ENCODE measurements at regions of chr7 and their contacts with region 1.

Region 1: DNA sequence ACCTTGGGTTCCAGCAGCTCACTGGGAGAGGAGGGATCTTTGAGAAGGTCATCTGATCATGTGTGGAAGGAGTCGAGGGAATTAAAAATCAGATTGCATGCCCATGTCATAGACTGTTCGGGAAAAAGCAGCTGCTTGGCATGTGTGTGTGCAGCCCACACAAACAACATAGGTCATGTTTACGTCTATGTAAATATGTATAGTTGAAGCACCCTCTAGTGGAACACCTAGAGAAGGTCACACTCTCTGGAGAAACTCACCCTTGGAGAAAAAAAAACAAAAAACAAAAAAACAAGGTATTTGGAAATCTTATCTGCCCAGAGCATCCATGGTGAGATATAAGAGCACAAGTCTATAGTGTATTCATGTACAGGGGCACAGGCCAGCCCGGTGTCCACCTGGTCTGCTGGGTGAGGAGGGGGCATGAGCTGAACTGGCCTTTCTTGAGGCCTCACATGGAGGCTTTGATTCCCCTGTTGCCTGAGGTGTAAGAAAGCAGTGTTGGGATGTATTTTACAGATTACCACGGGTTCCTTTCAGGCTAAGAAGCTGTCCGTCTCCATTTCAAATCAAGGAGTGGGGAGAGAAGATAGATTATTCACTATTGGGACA is 98.0 kb downstream of the NPY start:
- DNase-seq: no peak
- ATAC-seq: peak; percentile 54
- H3K4me3 ChIP-seq: no peak overlapping the region
- H3K4me3 Mint-ChIP-seq: no peak overlapping the region
- H3K27ac ChIP-seq: no peak overlapping the region
- H3K27ac Mint-ChIP-seq: no peak overlapping the region
- H3K4me1 ChIP-seq: no peaks in the 10 kb centered on the region
- H3K4me1 Mint-ChIP-seq: no peaks in the 10 kb centered on the region
- H3K27me3 ChIP-seq: no peaks in the 10 kb centered on the region
- H3K27me3 Mint-ChIP-seq: peaks cover 0 to 3% (median 0%) of the 10 kb centered on the region in 5 donors

Region 2: DNA sequence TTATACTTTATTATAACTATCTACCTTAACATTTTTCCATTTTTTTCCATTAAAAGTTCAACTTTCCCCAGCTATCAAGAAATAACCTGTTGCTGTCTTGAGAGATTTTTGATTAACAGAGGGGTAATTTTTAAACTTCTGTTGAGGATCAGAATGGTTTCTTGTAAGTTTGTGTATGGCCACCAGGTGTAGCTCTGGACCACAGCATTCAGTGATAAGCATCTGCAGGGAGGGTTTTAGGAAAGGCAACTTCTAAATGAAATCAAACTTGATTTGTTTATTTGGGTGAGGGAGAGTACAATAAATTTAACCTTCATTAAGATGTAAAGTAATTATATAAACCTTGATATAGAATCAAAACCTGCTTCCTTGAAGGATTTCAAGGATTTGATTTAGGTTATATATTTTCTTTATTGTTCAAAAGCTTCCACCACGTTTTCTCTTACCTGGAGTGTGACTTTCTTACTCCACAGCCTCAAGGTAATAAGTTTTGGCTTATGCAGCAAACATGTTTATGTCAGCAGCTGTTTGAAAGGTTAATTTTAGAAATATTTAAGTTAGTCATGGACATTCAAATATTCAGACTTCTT is 518.7 kb before region 1 on chr7:
- CTCF ChIA-PET with region 1: no interaction called
- POLR2A ChIA-PET with region 1: no interaction called
- intact Hi-C with region 1: loop called in 1 of 2 experiments (anchors 2 kb)
- DNase-seq: peak in 3 of 9 donors; percentile 7 to 20 (median 12)
- ATAC-seq: no peak
- H3K4me3 ChIP-seq: no peak overlapping the region
- H3K4me3 Mint-ChIP-seq: no peak overlapping the region
- H3K27ac ChIP-seq: no peak overlapping the region
- H3K27ac Mint-ChIP-seq: no peak overlapping the region
- H3K4me1 ChIP-seq: no peaks in the 10 kb centered on the region
- H3K4me1 Mint-ChIP-seq: no peaks in the 10 kb centered on the region
- H3K27me3 ChIP-seq: no peaks in the 10 kb centered on the region
- H3K27me3 Mint-ChIP-seq: peaks cover 3 to 19% (median 6%) of the 10 kb centered on the region in 5 donors

Region 3: DNA sequence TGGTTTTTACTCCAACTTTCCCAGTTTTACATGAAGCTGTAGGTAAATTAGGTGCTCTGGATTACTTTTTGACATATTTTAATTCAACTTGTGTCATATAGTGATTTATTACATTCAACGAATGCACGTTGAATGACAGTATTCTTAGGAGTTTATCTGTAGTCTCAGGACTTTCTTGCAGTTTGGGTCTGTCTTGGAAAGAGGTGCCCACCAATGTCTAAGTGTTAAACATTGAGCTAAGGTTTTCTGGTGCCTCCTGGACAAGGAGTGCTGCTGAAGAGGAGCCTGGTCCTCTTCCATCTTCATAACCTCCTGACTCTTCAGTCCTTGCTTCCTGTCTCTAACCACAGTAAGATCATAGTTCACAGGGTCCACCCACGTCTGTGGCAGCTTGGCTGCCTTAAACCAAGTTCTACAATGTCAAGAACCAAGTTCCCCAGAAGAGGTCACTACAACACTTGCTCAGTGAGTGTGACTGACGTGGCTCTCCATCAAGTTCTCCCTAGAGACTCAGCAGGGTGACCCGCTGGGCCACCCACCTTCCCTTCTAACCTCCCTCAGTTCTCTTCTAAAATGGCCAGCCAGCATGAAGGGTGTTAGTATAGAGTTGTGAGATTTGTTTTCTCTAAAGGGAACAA is 91.9 kb before region 1 on chr7:
- CTCF ChIA-PET with region 1: no interaction called
- POLR2A ChIA-PET with region 1: interaction called, 4 read pairs
- intact Hi-C with region 1: loop called in 1 of 2 experiments (anchors 2 kb)
- DNase-seq: peak in 8 of 9 donors; percentile 17 to 51 (median 40)
- ATAC-seq: peak; percentile 83
- H3K4me3 ChIP-seq: no peak overlapping the region
- H3K4me3 Mint-ChIP-seq: no peak overlapping the region
- H3K27ac ChIP-seq: no peak overlapping the region
- H3K27ac Mint-ChIP-seq: no peak overlapping the region
- H3K4me1 ChIP-seq: peaks cover 0 to 5% of the 10 kb centered on the region in 2 donors
- H3K4me1 Mint-ChIP-seq: peaks cover 6 to 19% (median 12%) of the 10 kb centered on the region in 7 donors
- H3K27me3 ChIP-seq: peaks cover 0 to 16% of the 10 kb centered on the region in 2 donors
- H3K27me3 Mint-ChIP-seq: peaks cover 48 to 56% (median 50%) of the 10 kb centered on the region in 5 donors

Region 4: DNA sequence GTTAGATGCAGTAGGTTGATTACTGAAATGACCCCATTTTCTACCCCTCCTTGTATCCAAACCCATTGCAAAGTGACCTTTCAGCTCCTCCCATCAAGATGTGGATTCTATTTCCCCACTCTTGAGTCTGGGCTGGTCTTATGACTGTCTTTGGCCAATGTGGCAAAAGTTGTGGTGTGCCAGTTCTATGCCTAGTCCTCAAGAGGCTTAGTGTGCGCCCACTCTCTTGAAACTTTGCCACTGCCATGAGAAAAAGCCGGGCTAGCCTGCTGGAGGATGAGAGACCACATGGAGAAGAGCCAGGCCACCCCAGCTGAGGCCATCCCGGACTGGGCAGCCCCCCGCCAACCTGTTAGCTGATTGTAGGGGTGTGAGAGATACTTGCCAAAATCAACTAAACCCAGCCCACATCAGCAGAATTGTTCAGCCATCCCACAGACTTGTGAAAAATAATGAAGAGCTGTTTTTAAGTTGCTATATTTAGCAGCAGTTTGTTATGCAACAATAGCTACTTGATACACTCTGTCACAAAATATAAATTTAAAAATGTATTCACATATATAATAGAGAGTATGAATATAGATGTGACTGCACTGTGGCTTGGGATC is 60.3 kb after region 1 on chr7:
- CTCF ChIA-PET with region 1: no interaction called
- POLR2A ChIA-PET with region 1: no interaction called
- intact Hi-C with region 1: no loop called
- DNase-seq: no peak
- ATAC-seq: peak; percentile 54
- H3K4me3 ChIP-seq: no peak overlapping the region
- H3K4me3 Mint-ChIP-seq: peak overlapping the region in 1 of 10 donors; percentile 13
- H3K27ac ChIP-seq: no peak overlapping the region
- H3K27ac Mint-ChIP-seq: peak overlapping the region in 1 of 9 donors; percentile 41
- H3K4me1 ChIP-seq: peaks cover 0 to 9% of the 10 kb centered on the region in 2 donors
- H3K4me1 Mint-ChIP-seq: peaks cover 6 to 24% (median 9%) of the 10 kb centered on the region in 7 donors
- H3K27me3 ChIP-seq: no peaks in the 10 kb centered on the region
- H3K27me3 Mint-ChIP-seq: peaks cover 0 to 13% (median 2%) of the 10 kb centered on the region in 5 donors

Region 5: DNA sequence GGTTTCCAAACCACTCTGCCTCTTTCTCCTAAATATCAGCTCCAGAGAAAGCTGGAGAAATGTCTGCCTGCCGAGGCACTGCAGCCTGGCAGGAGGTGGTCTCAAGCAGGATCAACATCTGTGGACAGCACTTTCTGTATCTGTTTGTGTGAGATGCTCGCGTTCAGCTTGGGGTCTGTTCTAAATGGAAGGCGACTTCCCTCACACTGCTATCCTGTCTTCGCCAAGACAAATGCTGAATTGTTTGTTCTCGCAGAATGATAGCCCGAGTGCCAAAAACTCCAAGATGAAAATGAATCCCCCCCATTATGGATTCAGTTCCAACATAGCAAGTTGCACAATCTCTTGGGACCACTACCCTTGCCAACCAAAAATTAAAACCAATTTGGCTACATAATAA is 119.0 kb after region 1 on chr7:
- CTCF ChIA-PET with region 1: no interaction called
- POLR2A ChIA-PET with region 1: no interaction called
- intact Hi-C with region 1: no loop called
- DNase-seq: no peak
- ATAC-seq: no peak
- H3K4me3 ChIP-seq: no peak overlapping the region
- H3K4me3 Mint-ChIP-seq: no peak overlapping the region
- H3K27ac ChIP-seq: no peak overlapping the region
- H3K27ac Mint-ChIP-seq: no peak overlapping the region
- H3K4me1 ChIP-seq: no peaks in the 10 kb centered on the region
- H3K4me1 Mint-ChIP-seq: no peaks in the 10 kb centered on the region
- H3K27me3 ChIP-seq: no peaks in the 10 kb centered on the region
- H3K27me3 Mint-ChIP-seq: peaks cover 0 to 12% (median 0%) of the 10 kb centered on the region in 5 donors

Measured in naive thymus-derived CD4-positive, alpha-beta T cell (primary cell).